G401 (cell line): ENCODE measurements at regions of chr6 and their contacts with region 1.

Region 1: DNA sequence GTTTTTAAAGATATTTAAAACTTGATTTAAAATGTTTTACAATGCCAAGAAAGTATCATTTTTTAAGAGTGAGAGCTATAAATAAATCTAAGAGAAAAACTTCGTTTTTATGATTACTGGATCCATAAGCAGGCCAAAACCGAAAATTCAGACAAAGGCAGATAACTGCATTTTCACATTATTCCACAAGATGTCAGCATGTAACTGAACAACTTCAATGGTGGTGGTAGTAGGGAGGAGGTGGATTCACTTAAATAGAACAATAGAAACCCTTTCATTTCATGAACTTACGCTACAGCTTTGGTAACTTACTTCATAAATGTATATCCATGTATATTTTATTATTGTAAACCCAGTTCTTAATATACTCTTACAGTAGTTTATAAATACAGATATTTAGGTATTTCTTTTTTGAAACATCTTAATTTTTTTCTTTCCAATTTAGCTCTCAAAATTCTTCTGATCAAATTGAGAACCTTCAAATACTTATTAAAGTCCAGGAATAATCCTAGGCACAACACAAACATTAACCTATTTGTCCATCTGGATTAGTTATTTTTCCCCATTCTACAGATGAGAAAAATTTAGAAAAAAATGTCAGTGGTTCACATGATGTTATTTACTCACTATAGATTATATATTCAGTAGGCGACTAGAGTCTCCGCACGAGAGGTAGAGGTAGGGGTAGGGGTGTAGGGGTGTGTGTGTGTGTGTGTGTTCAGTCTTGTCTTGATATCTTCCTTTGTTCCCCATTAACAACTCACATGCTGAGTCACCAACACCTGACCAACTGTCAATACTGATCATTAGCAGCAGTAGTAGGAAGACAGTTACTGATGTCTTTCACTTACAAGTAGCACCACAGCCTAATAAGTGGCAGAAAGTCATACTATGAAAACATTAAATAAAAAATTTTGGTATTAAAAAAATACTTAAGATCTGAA is 111.5 kb downstream of the ARHGAP18 start:
- DNase-seq: peak; percentile 64

Region 2: DNA sequence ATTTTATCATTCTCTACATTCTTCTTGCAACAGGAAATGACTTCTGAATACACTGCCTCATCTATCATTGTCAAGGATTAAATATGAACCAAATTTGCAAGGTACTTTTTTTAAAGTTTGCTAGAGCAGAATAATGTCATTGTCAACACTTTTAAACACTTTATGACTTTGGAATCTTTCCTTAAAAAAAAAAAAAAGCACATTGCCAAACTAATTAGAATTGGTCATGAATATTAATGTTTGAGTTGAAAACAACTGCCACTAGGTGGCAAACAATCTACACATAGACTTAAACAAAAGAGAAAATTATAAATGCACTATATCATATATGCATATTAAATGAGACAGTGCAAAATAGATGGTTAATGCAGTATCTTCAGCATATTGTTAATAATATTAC is 295.1 kb after region 1 on chr6:
- in situ Hi-C with region 1: no loop called
- DNase-seq: no peak

Region 3: DNA sequence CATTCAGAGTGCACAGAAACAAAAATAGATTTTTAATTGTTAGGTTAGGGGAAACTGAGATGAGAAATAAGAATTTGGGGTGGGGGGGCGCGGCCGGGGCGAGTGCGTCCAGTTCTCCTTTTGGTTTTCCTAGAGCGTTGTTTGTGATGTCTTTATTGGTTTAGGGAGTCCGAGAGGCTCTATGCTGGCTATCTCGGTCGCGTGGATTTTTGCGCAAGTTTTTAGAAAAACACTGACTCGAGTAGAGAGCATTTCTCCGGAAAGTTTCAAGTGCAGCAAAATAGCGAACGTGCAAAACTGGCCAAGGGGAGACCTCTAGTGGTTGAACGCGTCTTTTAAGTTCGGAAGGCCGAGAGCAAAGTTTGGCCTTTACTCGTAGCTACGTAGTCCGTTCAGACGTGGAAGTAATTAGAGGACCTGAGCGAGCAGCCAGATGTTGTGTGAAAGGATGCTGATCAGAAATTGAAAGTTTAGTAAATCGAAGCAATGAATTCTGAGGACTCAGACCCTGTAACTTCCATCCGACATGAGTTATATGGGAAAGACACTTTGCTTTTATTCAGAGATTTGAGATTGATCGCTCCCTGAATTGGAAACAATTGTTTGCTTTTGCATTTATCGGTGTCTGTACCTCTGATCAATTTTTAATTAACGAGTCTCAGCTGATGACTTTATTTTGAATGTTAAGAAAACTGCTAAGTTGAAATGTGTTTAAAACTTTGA is 422.6 kb after region 1 on chr6:
- in situ Hi-C with region 1: loop called (anchors 25 kb)
- DNase-seq: peak; percentile 86